Lower leg skin (tissue), 4 donors: ENCODE measurements at regions of chrX and their contacts with region 1.

Region 1: DNA sequence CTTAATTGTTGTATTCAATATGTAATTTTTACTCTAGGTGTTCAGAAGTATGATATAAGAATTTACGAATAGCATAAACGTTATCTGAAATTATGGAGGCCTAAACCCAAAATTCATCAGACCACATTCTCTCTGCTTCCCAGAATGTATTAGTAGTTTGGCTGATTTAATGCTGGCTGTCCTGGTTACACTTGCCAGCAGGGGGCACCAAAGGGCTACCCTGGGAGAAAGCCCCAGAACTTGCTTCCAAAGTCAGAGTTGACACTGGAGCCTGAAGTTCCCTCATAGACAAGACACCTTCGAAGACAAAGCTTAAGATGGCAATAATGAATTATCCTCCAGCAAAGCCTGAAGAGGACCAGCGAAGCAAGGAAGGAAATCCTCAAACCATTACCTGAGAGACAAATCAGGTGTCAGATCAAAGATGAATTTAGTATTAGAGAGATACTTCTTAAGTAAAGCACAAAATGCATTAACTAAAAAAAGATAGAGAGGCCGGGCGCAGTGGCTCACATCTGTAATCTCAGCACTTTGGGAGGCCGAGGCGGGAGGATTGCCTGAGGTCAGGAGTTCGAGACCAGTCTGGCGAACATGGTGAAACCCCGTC is 11.3 kb upstream of the ANOS1 start:
- DNase-seq: peak in 1 of 2 donors; percentile 88
- H3K4me3 ChIP-seq: no peak overlapping the region
- CTCF ChIP-seq: no peak
- POLR2A ChIP-seq: no peak

Region 2: DNA sequence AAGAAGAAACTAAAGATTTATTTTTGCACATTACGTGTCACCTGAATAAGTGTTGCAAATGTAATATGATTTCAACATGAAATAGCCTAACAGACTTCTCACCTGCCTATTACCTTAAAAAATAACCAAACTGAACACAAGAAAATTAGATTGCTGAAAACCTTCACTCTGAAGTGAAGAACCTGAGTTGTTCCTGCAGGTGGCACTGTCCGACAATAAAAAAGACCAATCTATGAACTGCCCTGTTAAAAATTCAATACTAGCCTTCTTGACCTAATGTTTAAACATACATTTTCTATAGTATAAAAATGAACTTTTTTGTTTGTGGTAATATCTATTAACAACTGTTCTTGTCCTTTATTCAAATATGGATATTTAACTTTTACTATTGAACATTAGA is 746.8 kb before region 1 on chrX:
- intact Hi-C with region 1: loop called (anchors 5 kb)
- DNase-seq: no peak
- H3K4me3 ChIP-seq: no peak overlapping the region
- CTCF ChIP-seq: no peak
- POLR2A ChIP-seq: no peak

Region 3: GRCh38 chrX:8345473-8345872 is 397.8 kb before region 1 on chrX:
- intact Hi-C with region 1: no loop called
- DNase-seq: no peak
- H3K4me3 ChIP-seq: no peak overlapping the region
- CTCF ChIP-seq: no peak
- POLR2A ChIP-seq: no peak

Region 4: DNA sequence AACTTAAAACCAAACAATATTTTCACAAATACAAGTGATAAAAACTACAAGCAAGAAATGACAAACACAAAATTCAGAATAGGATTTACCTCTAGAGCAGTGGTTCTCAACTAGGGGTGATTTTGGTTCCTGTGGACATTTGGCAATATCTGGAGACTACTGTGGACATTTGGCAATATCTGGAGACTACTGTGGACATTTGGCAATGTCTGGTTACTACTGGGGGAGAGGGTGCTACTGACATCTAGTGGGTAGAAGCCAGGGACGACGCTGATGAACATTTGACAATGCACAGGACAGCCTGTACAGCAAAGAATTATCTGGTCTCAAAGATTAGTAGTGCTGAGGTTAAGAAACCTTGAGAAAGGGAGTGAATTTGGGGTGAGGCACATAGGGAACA is 1583.3 kb after region 1 on chrX:
- intact Hi-C with region 1: loop called (anchors 5 kb)
- DNase-seq: no peak
- H3K4me3 ChIP-seq: no peak overlapping the region
- CTCF ChIP-seq: no peak
- POLR2A ChIP-seq: no peak

Region 5: DNA sequence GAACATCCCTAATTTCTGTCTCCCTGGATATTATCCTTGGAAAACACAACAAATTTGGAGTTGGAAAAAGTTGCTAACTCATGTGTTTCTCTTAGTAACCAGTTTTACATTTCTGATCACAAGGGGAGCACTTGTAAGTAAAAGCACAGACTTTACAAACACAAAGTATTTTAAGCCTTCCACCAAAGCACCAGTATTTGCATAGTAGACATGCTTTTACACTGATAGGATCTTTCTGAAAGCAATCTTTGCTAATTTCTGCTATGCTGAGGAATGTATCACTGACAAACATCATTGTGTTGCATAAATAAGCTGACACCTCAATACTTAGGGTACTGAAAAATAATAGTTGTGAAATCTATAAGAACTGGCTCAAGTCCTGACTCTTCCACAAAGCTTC is 1776.5 kb after region 1 on chrX:
- intact Hi-C with region 1: no loop called
- DNase-seq: no peak
- H3K4me3 ChIP-seq: no peak overlapping the region
- CTCF ChIP-seq: no peak
- POLR2A ChIP-seq: no peak